A549 (cell line): ENCODE measurements at regions of chr15 and their contacts with region 1.

Region 1: GRCh38 chr15:68053701-68054627 is at the start of gene PIAS1:
- DNase-seq: peak; percentile 91 to 95
- ATAC-seq: peak; percentile 92 to 95
- H3K4me3 ChIP-seq: peak within 1 kb of the TSS; percentile 90
- H3K27ac ChIP-seq: peak within 1 kb of the TSS; percentile 91 to 96
- H3K4me1 ChIP-seq: peaks cover 32% of the 10 kb centered on the region
- CTCF ChIP-seq: 0 out of 3 replicates have a peak, but pooled peaks have one; percentile 7
- EP300 ChIP-seq: no peak
- POLR2A ChIP-seq: peak; percentile 80
- RAD21 ChIP-seq: no peak; a peak in 2 of 5 replicates
- polyA plus RNA-seq, gene PIAS1: 49.5 and 53.7 TPM in 2 replicates

Region 2: GRCh38 chr15:67998599-67999122 is 55.3 kb before region 1 on chr15:
- CTCF ChIA-PET with region 1: interaction called, 4 read pairs
- POLR2A ChIA-PET with region 1: interaction called, 14 read pairs
- DNase-seq: peak; percentile 50 to 57
- ATAC-seq: peak; percentile 68 to 72
- H3K4me3 ChIP-seq: peak overlapping the region; percentile 18; the same call in 2 of the 3 replicates
- H3K27ac ChIP-seq: peak overlapping the region; percentile 71 to 76
- H3K4me1 ChIP-seq: peaks cover 30% of the 10 kb centered on the region
- CTCF ChIP-seq: no peak
- EP300 ChIP-seq: no peak
- POLR2A ChIP-seq: no peak
- RAD21 ChIP-seq: no peak

Region 3: DNA sequence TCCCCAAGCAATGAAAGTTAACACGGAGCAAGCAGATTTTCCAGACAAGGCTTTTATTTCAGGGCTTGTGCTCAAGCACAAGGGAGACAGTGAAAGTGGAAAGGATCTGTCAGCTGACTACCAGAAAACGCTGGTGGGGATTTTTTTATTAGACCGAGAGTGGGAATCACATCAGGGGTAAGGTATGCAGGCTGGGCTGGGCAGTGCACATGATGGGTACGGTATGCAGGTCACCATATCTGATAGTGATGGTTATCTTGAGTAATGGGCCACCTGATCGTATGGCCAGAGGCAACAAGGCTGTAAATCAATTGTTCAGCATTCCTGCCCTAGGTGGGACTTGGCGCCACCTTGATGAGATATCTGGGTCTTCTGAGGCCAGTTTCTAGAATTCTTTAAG is 36.8 kb before region 1 on chr15:
- CTCF ChIA-PET with region 1: no interaction called
- POLR2A ChIA-PET with region 1: no interaction called
- DNase-seq: no peak
- ATAC-seq: no peak
- H3K4me3 ChIP-seq: no peak overlapping the region
- H3K27ac ChIP-seq: no peak overlapping the region; a peak in 1 of 6 replicates
- H3K4me1 ChIP-seq: peaks cover 13% of the 10 kb centered on the region
- CTCF ChIP-seq: no peak
- EP300 ChIP-seq: no peak
- POLR2A ChIP-seq: no peak
- RAD21 ChIP-seq: no peak